Endothelial cell of umbilical vein (primary cell): ENCODE measurements at regions of chr5 and their contacts with region 1.

Region 1: GRCh38 chr5:177351385-177352329 is at the start of gene LMAN2:
- DNase-seq: peak; percentile 97
- H3K4me3 ChIP-seq: peak within 1 kb of the TSS; percentile 29 to 95 (median 61)
- H3K27ac ChIP-seq: peak within 1 kb of the TSS; percentile 77
- H3K4me1 ChIP-seq: peaks cover 21% of the 10 kb centered on the region
- H3K27me3 ChIP-seq: no peaks in the 10 kb centered on the region
- CTCF ChIP-seq: no peak
- POLR2A ChIP-seq: peak; percentile 77
- total RNA-seq, gene LMAN2: 151 and 160 TPM in 2 replicates

Region 2: GRCh38 chr5:177303121-177303924 is 48.3 kb before region 1 on chr5 and contains the starts of genes PRELID1 and RAB24:
- CTCF ChIA-PET with region 1: no interaction called
- POLR2A ChIA-PET with region 1: no interaction called
- dilution Hi-C with region 1: no loop called
- intact Hi-C with region 1: no loop called
- DNase-seq: peak; percentile 84
- H3K4me3 ChIP-seq: peak within 1 kb of the TSS; percentile 58 to 87 (median 80)
- H3K27ac ChIP-seq: peak within 1 kb of the TSS; percentile 65
- H3K4me1 ChIP-seq: peaks cover 35% of the 10 kb centered on the region
- H3K27me3 ChIP-seq: no peaks in the 10 kb centered on the region
- CTCF ChIP-seq: peak in 1 of 2 donors; percentile 49
- POLR2A ChIP-seq: peak; percentile 45
- total RNA-seq, gene PRELID1: 201 and 203 TPM in 2 replicates
- total RNA-seq, gene RAB24: 20.6 and 20.7 TPM in 2 replicates

Region 3: GRCh38 chr5:177327539-177328522 is 23.8 kb before region 1 on chr5:
- CTCF ChIA-PET with region 1: interaction called, 3 read pairs
- POLR2A ChIA-PET with region 1: no interaction called
- dilution Hi-C with region 1: no loop called
- intact Hi-C with region 1: loop called (anchors 1 kb)
- DNase-seq: peak; percentile 79
- H3K4me3 ChIP-seq: peak overlapping the region in 1 of 3 experiments; percentile 36
- H3K27ac ChIP-seq: peak overlapping the region; percentile 77
- H3K4me1 ChIP-seq: peaks cover 22% of the 10 kb centered on the region
- H3K27me3 ChIP-seq: no peaks in the 10 kb centered on the region
- CTCF ChIP-seq: no peak
- POLR2A ChIP-seq: peak; percentile 50

Region 4: GRCh38 chr5:177382423-177383029 is 30.9 kb after region 1 on chr5:
- CTCF ChIA-PET with region 1: interaction called, 11 read pairs
- POLR2A ChIA-PET with region 1: no interaction called
- dilution Hi-C with region 1: no loop called
- intact Hi-C with region 1: no loop called
- DNase-seq: peak; percentile 37
- H3K4me3 ChIP-seq: no peak overlapping the region
- H3K27ac ChIP-seq: no peak overlapping the region
- H3K4me1 ChIP-seq: no peaks in the 10 kb centered on the region
- H3K27me3 ChIP-seq: peaks cover 0 to 4% of the 10 kb centered on the region in 2 experiments
- CTCF ChIP-seq: peak in 1 of 2 donors; percentile 58
- POLR2A ChIP-seq: no peak